Activated B cell treated with CpG ODN at 0.5 μM for 24 hours (primary cell): ENCODE measurements at regions of chr10 and their contacts with region 1.

Region 1: DNA sequence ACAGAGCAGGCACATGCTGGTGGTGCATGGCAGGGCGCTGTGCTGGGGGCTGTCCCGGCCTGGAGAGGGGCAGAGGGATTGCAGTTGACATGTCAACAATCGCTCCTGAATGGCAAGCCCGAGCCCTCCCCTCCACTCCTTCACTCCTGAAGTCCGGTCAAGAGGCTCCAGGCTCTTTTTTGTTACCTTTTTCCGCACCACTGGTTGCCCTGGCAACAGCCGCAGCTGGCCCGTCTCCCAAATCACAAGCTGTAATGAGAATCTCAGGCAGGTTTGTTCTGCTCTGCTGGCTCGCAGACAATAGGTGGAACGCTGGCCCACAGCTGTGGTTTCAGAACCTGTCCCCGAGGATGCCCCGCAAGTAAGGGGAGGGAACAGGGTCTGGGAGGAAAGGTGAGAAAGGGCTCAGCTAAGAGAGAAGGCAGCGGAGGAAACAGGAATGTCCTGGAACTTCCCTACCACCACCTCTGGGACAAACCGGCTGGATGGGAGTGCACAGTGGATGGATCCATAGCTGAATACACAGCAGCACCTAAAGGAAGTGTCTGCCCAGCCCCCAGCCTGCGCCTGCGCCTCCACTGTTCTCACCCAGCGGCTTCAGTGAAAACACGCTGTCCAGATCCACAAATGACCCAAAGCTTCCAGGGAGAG is 58.9 kb downstream of the CALML3 start:
- DNase-seq: no peak
- ATAC-seq: peak; percentile 45
- H3K4me3 Mint-ChIP-seq: peak overlapping the region; percentile 58
- H3K27ac Mint-ChIP-seq: peak overlapping the region; percentile 41
- H3K4me1 Mint-ChIP-seq: peaks cover 50% of the 10 kb centered on the region
- H3K27me3 Mint-ChIP-seq: peaks cover 11% of the 10 kb centered on the region
- CTCF ChIP-seq: no peak

Region 2: GRCh38 chr10:5391790-5392189 is 191.9 kb before region 1 on chr10:
- CTCF ChIA-PET with region 1: no interaction called
- POLR2A ChIA-PET with region 1: no interaction called
- intact Hi-C with region 1: no loop called
- DNase-seq: no peak
- ATAC-seq: no peak
- H3K4me3 Mint-ChIP-seq: no peak overlapping the region
- H3K27ac Mint-ChIP-seq: no peak overlapping the region
- H3K4me1 Mint-ChIP-seq: no peaks in the 10 kb centered on the region
- H3K27me3 Mint-ChIP-seq: peaks cover 1% of the 10 kb centered on the region
- CTCF ChIP-seq: no peak

Region 3: DNA sequence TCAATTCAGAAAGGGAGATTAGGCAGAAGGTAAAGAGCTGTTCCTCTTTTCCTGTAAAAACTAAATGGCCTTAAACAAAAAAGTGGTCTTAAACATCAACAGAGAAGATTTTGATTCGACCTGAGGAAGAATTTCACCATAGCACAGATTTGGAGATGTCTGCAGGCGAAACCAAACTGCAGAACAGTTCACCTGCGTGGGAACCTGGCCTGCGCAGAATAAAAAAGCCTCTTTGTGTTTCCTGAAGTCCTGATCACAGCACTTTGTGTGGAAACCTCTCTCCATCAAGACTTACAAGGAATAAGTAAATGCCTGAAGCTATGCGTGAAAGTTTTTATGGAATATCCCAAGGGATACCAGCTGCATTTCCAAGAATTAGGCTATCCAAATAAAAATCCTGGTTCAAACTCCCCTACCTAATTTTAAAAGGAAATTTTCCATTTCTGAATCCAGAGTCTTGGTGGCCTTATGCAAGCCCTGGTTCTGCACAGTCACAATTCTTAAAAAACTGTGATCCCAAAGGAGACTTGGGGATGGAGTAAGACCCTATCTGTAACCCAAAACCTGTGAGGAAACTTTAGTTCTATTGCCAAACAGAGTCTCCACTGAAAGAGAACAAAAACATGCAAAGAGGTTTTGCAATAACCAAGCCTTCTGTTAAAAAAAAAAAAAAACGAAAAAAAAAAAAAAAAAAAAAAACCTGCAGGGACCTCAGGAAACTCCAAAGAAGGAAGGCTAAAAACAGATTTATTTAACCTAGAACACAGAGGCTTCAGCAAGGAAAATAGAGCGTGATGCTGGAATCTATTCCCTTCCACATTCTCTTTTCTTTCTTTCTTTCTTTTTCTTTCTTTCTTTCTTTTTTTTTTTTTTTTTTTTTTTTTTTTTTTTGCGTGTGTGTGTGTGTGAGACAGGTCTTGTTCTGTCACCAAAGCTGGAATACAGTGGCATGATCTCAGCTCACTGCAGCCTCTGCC is 48.5 kb before region 1 on chr10:
- CTCF ChIA-PET with region 1: no interaction called
- POLR2A ChIA-PET with region 1: no interaction called
- intact Hi-C with region 1: loop called (anchors 5 kb)
- DNase-seq: no peak
- ATAC-seq: no peak
- H3K4me3 Mint-ChIP-seq: no peak overlapping the region
- H3K27ac Mint-ChIP-seq: no peak overlapping the region
- H3K4me1 Mint-ChIP-seq: no peaks in the 10 kb centered on the region
- H3K27me3 Mint-ChIP-seq: peaks cover 3% of the 10 kb centered on the region
- CTCF ChIP-seq: no peak

Region 4: GRCh38 chr10:5987747-5988146 is 404.1 kb after region 1 on chr10:
- CTCF ChIA-PET with region 1: no interaction called
- POLR2A ChIA-PET with region 1: no interaction called
- intact Hi-C with region 1: no loop called
- DNase-seq: no peak
- ATAC-seq: peak; percentile 90
- H3K4me3 Mint-ChIP-seq: peak overlapping the region; percentile 6
- H3K27ac Mint-ChIP-seq: peak overlapping the region; percentile 62
- H3K4me1 Mint-ChIP-seq: peaks cover 10% of the 10 kb centered on the region
- H3K27me3 Mint-ChIP-seq: no peaks in the 10 kb centered on the region
- CTCF ChIP-seq: no peak